ENCODE measurements at regions of chr16 and their contacts with region 1.

Region 1: GRCh38 chr16:56589141-56590039 is at the start of gene MT3:
- DNase-seq: peak; percentile 39
- H3K4me3 Mint-ChIP-seq: peak within 1 kb of the TSS; percentile 70
- H3K27ac Mint-ChIP-seq: no peak within 1 kb of the TSS
- H3K4me1 Mint-ChIP-seq: peaks cover 12% of the 10 kb centered on the region
- H3K27me3 Mint-ChIP-seq: peaks cover 34% of the 10 kb centered on the region
- total RNA-seq, gene MT3: 3.1 to 3.9 TPM

Region 2: GRCh38 chr16:56569801-56570370 is 19.5 kb before region 1 on chr16:
- CTCF ChIA-PET with region 1: no interaction called
- POLR2A ChIA-PET with region 1: no interaction called
- intact Hi-C with region 1: no loop called
- DNase-seq: no peak
- H3K4me3 Mint-ChIP-seq: no peak overlapping the region
- H3K27ac Mint-ChIP-seq: no peak overlapping the region
- H3K4me1 Mint-ChIP-seq: no peaks in the 10 kb centered on the region
- H3K27me3 Mint-ChIP-seq: no peaks in the 10 kb centered on the region

Region 3: DNA sequence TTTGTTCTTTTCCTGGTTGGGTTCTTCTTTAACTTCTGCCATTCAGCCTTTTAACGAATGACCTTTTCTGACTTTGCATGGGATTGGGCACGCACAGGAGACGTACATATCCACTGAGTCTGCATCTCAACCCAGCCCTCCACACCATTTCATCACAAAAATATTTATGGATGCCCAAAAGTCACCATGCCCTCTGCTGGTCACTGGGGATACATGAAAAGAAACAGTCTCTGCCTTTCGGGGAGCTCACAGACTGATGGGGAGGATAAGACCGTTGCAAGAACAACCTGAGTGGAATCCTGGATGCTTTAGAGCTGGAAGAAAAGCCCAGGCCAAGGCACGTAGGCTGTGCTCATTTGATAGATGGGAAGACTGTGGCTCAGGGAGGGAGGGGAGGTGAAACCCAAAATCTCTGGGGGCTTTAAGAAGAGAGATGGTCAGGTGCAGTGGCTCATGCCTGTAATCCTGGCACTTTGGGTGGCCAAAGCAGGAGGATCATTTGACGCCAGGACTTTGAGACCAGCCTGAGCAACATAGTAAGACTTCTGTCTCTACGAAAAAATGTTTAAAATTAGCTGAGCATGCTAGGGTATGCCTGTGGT is 11.1 kb after region 1 on chr16:
- CTCF ChIA-PET with region 1: interaction called, 14 read pairs
- POLR2A ChIA-PET with region 1: no interaction called
- intact Hi-C with region 1: no loop called
- DNase-seq: peak; percentile 37
- H3K4me3 Mint-ChIP-seq: no peak overlapping the region
- H3K27ac Mint-ChIP-seq: no peak overlapping the region
- H3K4me1 Mint-ChIP-seq: peaks cover 9% of the 10 kb centered on the region
- H3K27me3 Mint-ChIP-seq: peaks cover 6% of the 10 kb centered on the region

Measured in activated CD4-positive, alpha-beta memory T cell treated with anti-CD3 and anti-CD28 coated beads for 36 hours (primary cell).